A549 (cell line): ENCODE measurements at regions of chr10 and their contacts with region 1.

Region 1: GRCh38 chr10:100551196-100551595 is 15.5 kb downstream of the HIF1AN start:
- DNase-seq: no peak
- ATAC-seq: no peak
- H3K4me3 ChIP-seq: no peak overlapping the region
- H3K27ac ChIP-seq: no peak overlapping the region
- H3K4me1 ChIP-seq: peaks cover 6% of the 10 kb centered on the region; the same call in 1 of the 3 replicates
- CTCF ChIP-seq: no peak
- EP300 ChIP-seq: no peak
- POLR2A ChIP-seq: no peak
- RAD21 ChIP-seq: no peak

Region 2: GRCh38 chr10:100089241-100089640 is 462.0 kb before region 1 on chr10:
- CTCF ChIA-PET with region 1: no interaction called
- POLR2A ChIA-PET with region 1: no interaction called
- DNase-seq: no peak
- ATAC-seq: no peak
- H3K4me3 ChIP-seq: no peak overlapping the region
- H3K27ac ChIP-seq: no peak overlapping the region
- H3K4me1 ChIP-seq: peaks cover 7% of the 10 kb centered on the region; the same call in 1 of the 3 replicates
- CTCF ChIP-seq: no peak
- EP300 ChIP-seq: no peak
- POLR2A ChIP-seq: no peak
- RAD21 ChIP-seq: no peak

Region 3: GRCh38 chr10:100535715-100536353 is 15.4 kb before region 1 on chr10 and contains the start of gene HIF1AN:
- CTCF ChIA-PET with region 1: interaction called, 19 read pairs
- POLR2A ChIA-PET with region 1: interaction called, 6 read pairs
- DNase-seq: peak; percentile 97 to 98
- ATAC-seq: peak; percentile 99
- H3K4me3 ChIP-seq: peak within 1 kb of the TSS; percentile 75
- H3K27ac ChIP-seq: peak within 1 kb of the TSS; percentile 84 to 87
- H3K4me1 ChIP-seq: peaks cover 12% of the 10 kb centered on the region; the same call in 2 of the 3 replicates
- CTCF ChIP-seq: peak; percentile 85
- EP300 ChIP-seq: no peak
- POLR2A ChIP-seq: peak; percentile 87
- RAD21 ChIP-seq: no peak
- polyA plus RNA-seq, gene HIF1AN: 21.6 and 26.4 TPM in 2 replicates

Region 4: GRCh38 chr10:100600218-100600617 is 49.0 kb after region 1 on chr10:
- CTCF ChIA-PET with region 1: no interaction called
- POLR2A ChIA-PET with region 1: no interaction called
- DNase-seq: no peak
- ATAC-seq: no peak
- H3K4me3 ChIP-seq: no peak overlapping the region
- H3K27ac ChIP-seq: no peak overlapping the region
- H3K4me1 ChIP-seq: no peaks in the 10 kb centered on the region
- CTCF ChIP-seq: no peak
- EP300 ChIP-seq: no peak
- POLR2A ChIP-seq: no peak
- RAD21 ChIP-seq: no peak